ENCODE measurements at regions of chr11 and their contacts with region 1.

Region 1: GRCh38 chr11:11819466-11819865 is 22.3 kb upstream of the USP47 start:
- DNase-seq: no peak

Region 2: DNA sequence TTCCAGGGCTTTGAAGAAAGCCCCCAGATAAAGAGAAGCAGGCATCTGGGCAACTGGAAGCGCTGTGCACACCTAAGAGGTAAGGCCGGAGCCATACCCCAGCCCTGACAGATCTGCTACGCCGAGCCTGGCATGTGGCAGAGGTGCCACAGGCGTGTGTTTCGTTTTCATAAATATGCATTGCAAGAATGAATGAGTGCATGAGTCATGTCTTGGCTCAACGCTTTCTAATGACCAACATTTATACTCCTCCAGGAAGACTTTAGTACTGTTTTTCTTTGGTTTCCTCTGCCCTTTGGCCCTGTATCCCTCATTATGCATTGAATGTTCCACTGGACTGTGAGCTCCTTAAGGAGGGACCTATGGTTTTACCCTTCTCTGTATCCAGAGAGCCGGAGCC is 427.7 kb before region 1 on chr11:
- CTCF ChIA-PET with region 1: no interaction called
- POLR2A ChIA-PET with region 1: no interaction called
- DNase-seq: no peak

Region 3: DNA sequence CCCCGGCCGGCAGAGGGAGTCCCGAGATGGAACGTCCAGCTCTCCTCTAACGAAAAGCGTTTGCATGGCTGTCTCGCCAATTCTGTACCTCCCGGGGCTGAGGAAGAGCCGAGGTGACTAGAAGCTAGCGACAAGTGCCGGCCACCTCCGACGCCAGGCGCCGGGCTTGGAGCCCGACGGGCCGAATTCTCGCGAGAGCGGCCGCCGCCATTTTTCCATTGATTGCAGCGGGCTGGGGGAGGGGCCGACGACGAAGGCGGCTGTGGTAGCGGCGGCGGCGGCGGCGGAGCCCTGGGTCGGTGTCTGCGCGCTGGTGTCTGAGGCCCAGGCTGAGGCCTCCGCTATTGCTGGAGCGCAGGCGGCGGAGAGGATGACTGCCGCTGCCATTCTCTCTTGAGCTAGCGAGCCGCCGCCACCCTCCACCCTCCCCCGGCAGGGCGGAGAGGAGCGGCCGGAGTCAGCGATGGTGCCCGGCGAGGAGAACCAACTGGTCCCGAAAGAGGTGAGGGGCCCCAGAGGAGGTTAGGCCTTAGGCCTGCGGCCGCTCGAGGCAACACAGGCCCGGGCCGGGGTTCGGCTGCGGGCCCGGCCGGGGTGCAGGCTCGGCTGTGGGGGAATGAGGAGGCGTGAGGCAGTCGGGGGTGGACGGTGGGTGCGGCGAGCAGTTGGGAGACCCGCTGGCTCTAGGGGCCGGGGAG is 22.4 kb after region 1 on chr11 and contains the start of gene USP47:
- CTCF ChIA-PET with region 1: no interaction called
- POLR2A ChIA-PET with region 1: interaction called, 11 read pairs
- DNase-seq: peak; percentile 82

Measured in HEK293T (cell line).